Activated B cell treated with CpG ODN at 0.5 μM for 24 hours (primary cell): ENCODE measurements at regions of chr13 and their contacts with region 1.

Region 1: GRCh38 chr13:114143806-114144605 is 11.6 kb upstream of the RASA3 start:
- DNase-seq: peak; percentile 45
- ATAC-seq: peak; percentile 66
- H3K4me3 Mint-ChIP-seq: no peak overlapping the region
- H3K27ac Mint-ChIP-seq: peak overlapping the region; percentile 26
- H3K4me1 Mint-ChIP-seq: peaks cover 13% of the 10 kb centered on the region
- H3K27me3 Mint-ChIP-seq: no peaks in the 10 kb centered on the region
- CTCF ChIP-seq: no peak

Region 2: DNA sequence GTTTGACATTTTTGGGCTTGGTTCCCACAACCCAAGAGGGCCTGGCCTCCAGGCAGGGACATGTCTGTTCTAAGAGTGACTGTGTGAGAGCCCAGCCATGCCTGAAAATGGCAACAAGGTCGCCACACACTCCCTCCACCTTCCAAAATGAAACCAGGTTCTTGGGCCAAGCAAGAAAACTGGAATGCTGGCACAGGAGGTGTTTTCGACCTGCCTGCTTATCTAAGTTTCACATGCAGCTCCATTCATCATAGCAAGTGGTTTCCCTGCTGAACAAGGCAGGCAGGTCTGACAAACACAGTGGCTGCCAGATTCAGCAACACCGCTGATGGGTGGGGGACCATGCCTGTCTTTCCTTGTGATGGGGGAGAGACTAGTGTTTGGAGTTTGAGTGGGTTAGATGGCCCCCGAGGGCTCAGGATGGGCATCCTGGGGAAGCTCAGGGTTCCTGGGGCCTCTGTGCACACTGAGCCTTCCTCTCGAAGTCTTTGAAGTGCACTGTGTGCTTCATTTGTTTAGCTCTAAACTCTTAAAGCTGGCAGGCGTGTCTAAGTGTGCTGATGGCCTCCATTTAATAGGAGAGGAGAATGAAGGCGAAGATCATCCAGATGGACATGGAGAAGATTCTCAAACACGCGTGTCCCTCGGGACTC is 262.3 kb before region 1 on chr13:
- CTCF ChIA-PET with region 1: no interaction called
- POLR2A ChIA-PET with region 1: no interaction called
- intact Hi-C with region 1: no loop called
- DNase-seq: no peak
- ATAC-seq: no peak
- H3K4me3 Mint-ChIP-seq: no peak overlapping the region
- H3K27ac Mint-ChIP-seq: no peak overlapping the region
- H3K4me1 Mint-ChIP-seq: no peaks in the 10 kb centered on the region
- H3K27me3 Mint-ChIP-seq: peaks cover 27% of the 10 kb centered on the region
- CTCF ChIP-seq: no peak

Region 3: GRCh38 chr13:114154476-114154875 is 10.5 kb after region 1 on chr13:
- CTCF ChIA-PET with region 1: interaction called, 5 read pairs
- POLR2A ChIA-PET with region 1: no interaction called
- intact Hi-C with region 1: loop called (anchors 1 kb)
- DNase-seq: no peak
- ATAC-seq: peak; percentile 74
- H3K4me3 Mint-ChIP-seq: peak overlapping the region; percentile 24
- H3K27ac Mint-ChIP-seq: no peak overlapping the region
- H3K4me1 Mint-ChIP-seq: peaks cover 40% of the 10 kb centered on the region
- H3K27me3 Mint-ChIP-seq: peaks cover 5% of the 10 kb centered on the region
- CTCF ChIP-seq: no peak

Region 4: DNA sequence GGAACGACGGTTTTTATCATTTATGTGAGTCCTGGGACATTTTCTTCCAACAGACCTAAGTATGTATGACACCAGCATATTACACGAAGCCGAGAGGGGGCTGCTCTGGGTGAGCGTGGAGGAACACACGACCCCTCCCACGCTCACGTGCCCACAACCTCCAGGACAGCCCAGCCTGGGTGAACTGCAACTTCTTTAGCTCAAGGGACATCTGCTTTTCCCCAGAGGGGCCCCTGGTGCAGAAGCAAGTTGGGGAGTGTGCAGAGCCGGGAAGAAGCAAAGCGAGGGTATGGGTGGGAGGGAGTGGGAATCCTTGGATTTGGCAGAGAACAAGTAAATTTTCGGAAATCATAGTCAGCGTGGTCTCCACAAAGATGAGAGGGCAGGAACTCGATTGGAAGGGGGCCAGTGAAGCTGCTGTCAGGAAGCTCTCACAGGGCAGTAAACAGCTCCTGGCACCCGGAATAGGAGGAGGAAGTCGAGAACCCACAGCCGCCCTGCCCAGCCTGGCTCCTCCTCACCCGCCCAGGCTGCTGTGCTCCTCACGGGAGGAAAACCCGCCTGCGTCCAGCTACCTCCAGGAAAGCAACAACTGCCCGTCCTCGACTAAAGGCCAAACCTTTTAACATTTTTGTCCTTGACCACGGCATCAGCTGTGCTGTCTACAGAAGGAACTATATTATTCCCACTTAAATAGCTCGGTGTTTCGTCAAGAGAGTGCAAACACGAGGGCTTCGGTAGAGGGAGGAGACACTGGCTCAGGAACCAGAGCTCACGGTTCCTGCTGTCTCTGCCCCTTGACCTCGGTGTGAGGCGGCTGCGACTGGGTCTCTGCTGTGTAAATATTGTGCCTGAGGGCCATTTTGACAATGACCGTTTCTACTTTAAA is 17.9 kb after region 1 on chr13:
- CTCF ChIA-PET with region 1: interaction called, 3 read pairs
- POLR2A ChIA-PET with region 1: interaction called, 3 read pairs
- intact Hi-C with region 1: loop called (anchors 2 kb)
- DNase-seq: no peak
- ATAC-seq: peak; percentile 72
- H3K4me3 Mint-ChIP-seq: peak overlapping the region; percentile 80
- H3K27ac Mint-ChIP-seq: peak overlapping the region; percentile 41
- H3K4me1 Mint-ChIP-seq: peaks cover 51% of the 10 kb centered on the region
- H3K27me3 Mint-ChIP-seq: peaks cover 13% of the 10 kb centered on the region
- CTCF ChIP-seq: no peak